Breast epithelium (tissue), 4 donors: ENCODE measurements at regions of chr12 and their contacts with region 1.

Region 1: GRCh38 chr12:14332482-14332881 is 33.0 kb upstream of the ATF7IP start:
- DNase-seq: no peak
- H3K4me3 ChIP-seq: no peak overlapping the region
- H3K27ac ChIP-seq: no peak overlapping the region
- H3K4me1 ChIP-seq: no peaks in the 10 kb centered on the region
- H3K27me3 ChIP-seq: no peaks in the 10 kb centered on the region
- CTCF ChIP-seq: no peak
- POLR2A ChIP-seq: no peak

Region 2: GRCh38 chr12:14207905-14208551 is 124.5 kb before region 1 on chr12:
- intact Hi-C with region 1: no loop called
- DNase-seq: peak in 1 of 2 donors; percentile 32
- H3K4me3 ChIP-seq: no peak overlapping the region
- H3K27ac ChIP-seq: peak overlapping the region; percentile 79 to 89
- H3K4me1 ChIP-seq: peaks cover 0 to 3% of the 10 kb centered on the region in 2 donors
- H3K27me3 ChIP-seq: no peaks in the 10 kb centered on the region
- CTCF ChIP-seq: no peak
- POLR2A ChIP-seq: no peak

Region 3: DNA sequence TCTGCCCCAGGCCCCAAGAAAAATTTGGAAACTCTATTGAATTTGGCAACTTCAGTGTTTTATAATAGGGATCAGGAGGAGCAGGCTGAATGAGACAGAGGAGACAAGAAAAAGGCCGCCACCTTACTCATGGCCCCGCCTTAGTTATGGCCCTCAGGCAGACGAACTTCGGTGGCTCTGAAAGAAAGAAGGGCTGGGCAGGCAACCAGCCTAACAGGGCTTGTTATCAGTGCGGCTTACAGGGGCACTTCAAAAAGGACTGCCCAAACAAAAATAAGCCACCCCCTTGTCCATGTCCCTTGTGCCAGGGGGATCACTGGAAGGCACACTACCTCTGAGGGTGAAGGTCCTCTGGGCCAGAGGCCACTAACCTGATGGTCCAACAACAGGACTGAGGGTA is 113.3 kb before region 1 on chr12:
- intact Hi-C with region 1: no loop called
- DNase-seq: no peak
- H3K4me3 ChIP-seq: no peak overlapping the region
- H3K27ac ChIP-seq: peak overlapping the region in 1 of 2 donors; percentile 25
- H3K4me1 ChIP-seq: no peaks in the 10 kb centered on the region
- H3K27me3 ChIP-seq: no peaks in the 10 kb centered on the region
- CTCF ChIP-seq: no peak
- POLR2A ChIP-seq: no peak

Region 4: GRCh38 chr12:14731821-14732220 is 399.3 kb after region 1 on chr12:
- intact Hi-C with region 1: no loop called
- DNase-seq: no peak
- H3K4me3 ChIP-seq: no peak overlapping the region
- H3K27ac ChIP-seq: no peak overlapping the region
- H3K4me1 ChIP-seq: no peaks in the 10 kb centered on the region
- H3K27me3 ChIP-seq: no peaks in the 10 kb centered on the region
- CTCF ChIP-seq: no peak
- POLR2A ChIP-seq: no peak

Region 5: GRCh38 chr12:15534322-15534721 is 1201.8 kb after region 1 on chr12:
- intact Hi-C with region 1: no loop called
- DNase-seq: no peak
- H3K4me3 ChIP-seq: no peak overlapping the region
- H3K27ac ChIP-seq: no peak overlapping the region
- H3K4me1 ChIP-seq: no peaks in the 10 kb centered on the region
- H3K27me3 ChIP-seq: no peaks in the 10 kb centered on the region
- CTCF ChIP-seq: no peak
- POLR2A ChIP-seq: no peak

Region 6: GRCh38 chr12:16310934-16311333 is 1978.5 kb after region 1 on chr12:
- intact Hi-C with region 1: loop called (anchors 10 kb)
- DNase-seq: no peak
- H3K4me3 ChIP-seq: no peak overlapping the region
- H3K27ac ChIP-seq: no peak overlapping the region
- H3K4me1 ChIP-seq: no peaks in the 10 kb centered on the region
- H3K27me3 ChIP-seq: no peaks in the 10 kb centered on the region
- CTCF ChIP-seq: no peak
- POLR2A ChIP-seq: no peak